ENCODE measurements at regions of chr10 and their contacts with region 1.

Region 1: DNA sequence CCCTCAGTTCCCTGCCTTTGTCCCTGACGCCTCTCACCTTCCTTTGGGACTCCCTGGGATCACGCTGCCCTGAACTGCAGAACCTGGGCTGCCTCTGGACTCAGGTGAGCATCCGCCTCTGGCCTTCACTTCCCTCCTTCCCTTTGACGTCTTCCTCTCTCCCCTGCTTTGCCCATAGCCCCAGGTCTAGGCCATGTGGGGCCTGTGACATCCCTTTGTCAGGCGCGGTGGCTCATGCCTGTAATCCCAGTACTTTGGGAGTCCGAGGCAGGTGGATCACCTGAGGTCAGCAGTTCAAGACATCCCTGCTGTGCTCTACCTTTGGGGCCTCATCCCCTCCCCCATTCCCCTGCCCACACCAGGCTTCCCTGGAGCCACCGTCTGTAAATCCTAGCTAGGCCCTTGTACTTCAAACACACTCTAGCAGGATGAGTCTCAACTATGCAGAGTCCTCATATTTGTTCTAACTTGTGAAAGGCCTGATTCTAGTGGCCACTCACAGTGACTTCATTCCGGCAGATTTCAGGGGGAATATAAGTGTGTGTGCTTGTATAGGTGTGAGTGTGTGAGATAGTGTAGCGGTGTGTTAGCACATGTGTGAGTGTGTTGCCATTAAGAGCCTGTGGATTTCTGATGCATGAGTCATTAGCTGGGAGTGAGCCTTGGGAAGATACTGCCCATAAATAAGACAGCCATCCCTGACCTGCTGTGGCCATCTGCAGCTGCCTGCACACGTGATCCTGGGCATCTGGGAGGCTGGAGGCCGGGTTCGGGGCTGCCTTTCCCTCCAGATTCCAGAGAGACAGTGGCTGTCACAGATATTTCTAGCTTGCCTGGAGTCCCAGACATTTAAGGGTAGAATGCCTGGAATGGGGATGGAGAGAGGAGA is 1.8 kb upstream of the NEURL1 start:
- DNase-seq: peak; percentile 86
- H3K4me3 ChIP-seq: no peak overlapping the region
- H3K27ac ChIP-seq: peak overlapping the region; percentile 21 to 76; a peak in 3 of 4 replicates
- H3K4me1 ChIP-seq: peaks cover 0 to 32% of the 10 kb centered on the region in 2 experiments; a peak in 2 of 4 replicates
- H3K27me3 ChIP-seq: peaks cover 30% of the 10 kb centered on the region
- CTCF ChIP-seq: no peak
- EP300 ChIP-seq: peak in 1 of 2 experiments; percentile 23; a peak in 1 of 4 replicates
- RAD21 ChIP-seq: no peak

Region 2: GRCh38 chr10:103367782-103368518 is 123.8 kb before region 1 on chr10 and contains the start of gene TAF5:
- CTCF ChIA-PET with region 1: no interaction called
- POLR2A ChIA-PET with region 1: no interaction called
- DNase-seq: peak; percentile 91
- H3K4me3 ChIP-seq: peak within 1 kb of the TSS; percentile 69 to 90
- H3K27ac ChIP-seq: peak within 1 kb of the TSS; percentile 64 to 79
- H3K4me1 ChIP-seq: peaks cover 0 to 3% of the 10 kb centered on the region in 2 experiments; a peak in 1 of 4 replicates
- H3K27me3 ChIP-seq: no peaks in the 10 kb centered on the region
- CTCF ChIP-seq: no peak
- EP300 ChIP-seq: no peak
- RAD21 ChIP-seq: no peak
- polyA plus RNA-seq, gene TAF5: 1.3 and 1.4 TPM in 2 replicates

Region 3: DNA sequence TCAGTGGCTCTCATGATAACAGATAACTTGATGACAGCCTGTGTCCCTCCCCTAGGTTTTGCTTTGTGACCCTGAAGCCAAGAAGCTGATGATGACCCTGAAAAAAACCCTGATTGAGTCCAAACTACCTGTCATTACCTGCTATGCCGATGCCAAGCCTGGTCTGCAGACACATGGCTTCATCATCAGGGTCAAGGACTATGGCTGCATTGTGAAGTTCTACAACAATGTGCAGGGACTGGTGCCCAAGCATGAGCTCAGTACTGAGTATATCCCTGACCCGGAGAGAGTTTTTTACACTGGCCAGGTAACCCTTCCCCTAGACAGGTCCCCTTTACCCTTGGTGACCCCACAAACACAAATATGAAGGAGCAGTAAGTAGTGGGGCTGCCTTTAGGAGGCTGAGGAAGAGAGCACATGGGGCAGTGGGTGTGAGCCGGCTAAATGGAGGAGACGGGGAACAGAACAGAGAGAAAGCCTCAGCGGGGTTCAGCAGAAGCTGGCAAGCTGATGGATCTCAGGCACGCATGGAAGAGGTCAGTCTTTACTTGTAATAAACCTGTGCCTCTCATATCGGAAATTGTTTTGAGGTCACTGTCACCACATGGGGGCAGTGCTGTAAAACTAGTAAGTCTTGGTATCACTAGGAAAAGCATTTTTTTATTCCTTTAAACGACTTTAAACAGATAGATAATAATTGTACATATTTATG is 75.1 kb before region 1 on chr10:
- CTCF ChIA-PET with region 1: interaction called, 83 read pairs
- POLR2A ChIA-PET with region 1: no interaction called
- DNase-seq: peak; percentile 50
- H3K4me3 ChIP-seq: no peak overlapping the region
- H3K27ac ChIP-seq: no peak overlapping the region
- H3K4me1 ChIP-seq: no peaks in the 10 kb centered on the region
- H3K27me3 ChIP-seq: no peaks in the 10 kb centered on the region
- CTCF ChIP-seq: peak; percentile 79
- EP300 ChIP-seq: no peak
- RAD21 ChIP-seq: peak; percentile 69

Region 4: GRCh38 chr10:103504181-103504783 is 12.5 kb after region 1 on chr10:
- CTCF ChIA-PET with region 1: interaction called, 16 read pairs
- POLR2A ChIA-PET with region 1: interaction called, 13 read pairs
- DNase-seq: peak; percentile 27
- H3K4me3 ChIP-seq: no peak overlapping the region
- H3K27ac ChIP-seq: peak overlapping the region in 1 of 2 experiments; percentile 48; a peak in 2 of 4 replicates
- H3K4me1 ChIP-seq: peaks cover 6 to 40% of the 10 kb centered on the region in 2 experiments; a peak in 3 of 4 replicates
- H3K27me3 ChIP-seq: peaks cover 15% of the 10 kb centered on the region
- CTCF ChIP-seq: no peak
- EP300 ChIP-seq: peak in 1 of 2 experiments; percentile 37; a peak in 1 of 4 replicates
- RAD21 ChIP-seq: no peak

Region 5: GRCh38 chr10:103542764-103543616 is 51.3 kb after region 1 on chr10:
- CTCF ChIA-PET with region 1: interaction called, 16 read pairs
- POLR2A ChIA-PET with region 1: no interaction called
- DNase-seq: peak; percentile 82
- H3K4me3 ChIP-seq: peak overlapping the region; percentile 32 to 63; a peak in 3 of 4 replicates
- H3K27ac ChIP-seq: peak overlapping the region in 1 of 2 experiments; percentile 91; a peak in 2 of 4 replicates
- H3K4me1 ChIP-seq: peaks cover 8 to 43% of the 10 kb centered on the region in 2 experiments; a peak in 3 of 4 replicates
- H3K27me3 ChIP-seq: peaks cover 15% of the 10 kb centered on the region; the same call in 1 of the 2 replicates
- CTCF ChIP-seq: peak; percentile 60
- EP300 ChIP-seq: peak in 1 of 2 experiments; percentile 74; a peak in 2 of 4 replicates
- RAD21 ChIP-seq: peak; percentile 54